Endothelial cell of umbilical vein (primary cell): ENCODE measurements at regions of chr2 and their contacts with region 1.

Region 1: DNA sequence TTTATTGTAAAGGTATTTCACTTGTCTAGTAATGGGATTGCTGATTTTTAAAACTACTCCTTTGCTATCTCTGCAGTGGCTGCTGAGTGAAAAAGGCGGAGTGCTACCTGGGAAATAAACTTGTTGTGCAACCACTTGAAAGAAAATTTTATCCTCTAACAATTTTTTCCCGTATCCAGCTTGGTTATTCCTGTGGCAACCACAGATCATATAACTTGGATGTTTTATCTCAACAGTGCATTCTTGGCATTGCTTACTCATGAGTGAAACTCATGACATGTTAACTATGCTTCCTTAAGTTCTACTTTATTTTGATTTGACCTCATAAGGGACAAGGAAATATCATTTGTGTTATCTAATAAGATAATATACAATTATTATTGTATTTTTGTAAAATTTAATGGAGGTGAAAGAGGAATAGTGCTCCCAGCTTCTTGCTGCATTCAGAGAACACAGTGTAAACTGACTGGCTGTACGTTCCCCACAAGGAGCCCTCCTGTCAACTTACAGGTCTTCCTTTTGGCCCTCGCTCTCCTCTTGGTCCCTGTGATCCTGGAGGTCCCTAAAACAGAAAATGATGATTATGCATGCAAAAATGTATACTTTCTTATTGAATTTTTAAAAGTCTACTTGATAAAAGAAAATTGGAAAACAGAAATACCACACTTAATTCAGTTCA is 82.7 kb downstream of the COL5A2 start:
- DNase-seq: peak; percentile 61
- H3K4me3 ChIP-seq: no peak overlapping the region
- H3K27ac ChIP-seq: peak overlapping the region; percentile 50
- H3K4me1 ChIP-seq: peaks cover 15% of the 10 kb centered on the region
- H3K27me3 ChIP-seq: no peaks in the 10 kb centered on the region
- CTCF ChIP-seq: no peak
- POLR2A ChIP-seq: no peak

Region 2: DNA sequence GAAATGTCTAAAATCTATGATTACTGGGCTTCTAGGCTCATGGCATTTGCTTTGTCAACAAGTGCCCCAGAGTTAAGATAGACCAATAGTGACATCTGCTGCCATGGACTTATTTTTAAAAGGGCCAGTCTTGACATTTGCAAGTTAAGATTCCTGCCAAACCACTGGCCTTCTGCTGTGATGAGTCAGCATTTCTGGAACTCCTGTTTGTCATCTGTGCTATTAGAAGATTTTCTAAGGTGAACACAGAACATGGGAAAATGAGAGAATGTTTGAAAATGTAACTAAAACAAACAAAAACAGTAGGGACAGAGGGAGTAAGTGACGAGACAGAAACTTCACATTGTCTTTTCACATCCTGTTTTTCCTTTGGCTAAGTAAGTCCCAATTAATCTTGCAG is 250.6 kb after region 1 on chr2:
- CTCF ChIA-PET with region 1: no interaction called
- POLR2A ChIA-PET with region 1: no interaction called
- dilution Hi-C with region 1: no loop called
- intact Hi-C with region 1: loop called (anchors 1 kb)
- DNase-seq: peak; percentile 87
- H3K4me3 ChIP-seq: no peak overlapping the region
- H3K27ac ChIP-seq: peak overlapping the region; percentile 20
- H3K4me1 ChIP-seq: peaks cover 8% of the 10 kb centered on the region
- H3K27me3 ChIP-seq: no peaks in the 10 kb centered on the region
- CTCF ChIP-seq: no peak
- POLR2A ChIP-seq: no peak